HEK293 (cell line): ENCODE measurements at regions of chr22 and their contacts with region 1.

Region 1: GRCh38 chr22:37843741-37843990 is 468 bp downstream of the ANKRD54 start:
- H3K4me3 ChIP-seq: peak overlapping the region; percentile 74
- H3K27ac ChIP-seq: peak overlapping the region; percentile 95
- H3K4me1 ChIP-seq: no peaks in the 10 kb centered on the region
- CTCF ChIP-seq: no peak

Region 2: GRCh38 chr22:37581504-37581903 is 262.2 kb before region 1 on chr22:
- CTCF ChIA-PET with region 1: no interaction called
- POLR2A ChIA-PET with region 1: no interaction called
- H3K4me3 ChIP-seq: no peak overlapping the region
- H3K27ac ChIP-seq: no peak overlapping the region
- H3K4me1 ChIP-seq: 0 out of 2 replicates have a peak, but pooled peaks cover 3% of the 10 kb centered on the region
- CTCF ChIP-seq: no peak

Region 3: GRCh38 chr22:37807410-37808293 is 36.0 kb before region 1 on chr22 and contains the start of gene GCAT:
- CTCF ChIA-PET with region 1: interaction called, 5 read pairs
- POLR2A ChIA-PET with region 1: interaction called, 16 read pairs
- H3K4me3 ChIP-seq: peak within 1 kb of the TSS; percentile 68
- H3K27ac ChIP-seq: peak within 1 kb of the TSS; percentile 45; the same call in 1 of the 2 replicates
- H3K4me1 ChIP-seq: peaks cover 6% of the 10 kb centered on the region; the same call in 1 of the 2 replicates
- CTCF ChIP-seq: no peak

Region 4: GRCh38 chr22:37855462-37855861 is 11.8 kb after region 1 on chr22:
- CTCF ChIA-PET with region 1: interaction called, 4 read pairs
- POLR2A ChIA-PET with region 1: interaction called, 11 read pairs
- H3K4me3 ChIP-seq: no peak overlapping the region
- H3K27ac ChIP-seq: no peak overlapping the region; the same call in 1 of the 2 replicates
- H3K4me1 ChIP-seq: no peaks in the 10 kb centered on the region
- CTCF ChIP-seq: no peak

Region 5: GRCh38 chr22:37905534-37906363 is 62.1 kb after region 1 on chr22 and contains the start of gene MICALL1:
- CTCF ChIA-PET with region 1: no interaction called
- POLR2A ChIA-PET with region 1: interaction called, 24 read pairs
- H3K4me3 ChIP-seq: peak within 1 kb of the TSS; percentile 72
- H3K27ac ChIP-seq: peak within 1 kb of the TSS; percentile 98
- H3K4me1 ChIP-seq: peaks cover 10% of the 10 kb centered on the region; the same call in 1 of the 2 replicates
- CTCF ChIP-seq: peak; percentile 28; the same call in 1 of the 2 replicates

Region 6: DNA sequence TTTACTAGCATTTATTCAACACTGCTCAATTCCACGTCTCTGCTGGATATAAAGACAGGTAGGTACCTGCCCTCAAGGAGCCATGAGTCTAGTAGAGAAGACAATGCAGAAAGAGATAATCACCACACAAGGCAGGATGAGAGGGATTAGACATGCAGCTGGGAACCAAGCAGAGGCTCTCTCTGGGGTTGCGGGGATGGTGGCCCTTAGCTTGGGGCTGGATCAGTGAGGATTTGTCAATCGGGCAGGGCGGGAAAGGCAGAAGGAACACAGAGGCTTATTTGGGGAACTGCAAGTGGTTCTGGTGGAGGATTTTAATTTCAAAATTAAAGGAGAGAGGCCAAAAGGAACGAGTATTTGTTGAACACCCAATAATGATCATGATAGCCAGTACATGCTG is 734.8 kb after region 1 on chr22:
- CTCF ChIA-PET with region 1: no interaction called
- POLR2A ChIA-PET with region 1: no interaction called
- H3K4me3 ChIP-seq: no peak overlapping the region
- H3K27ac ChIP-seq: no peak overlapping the region
- H3K4me1 ChIP-seq: no peaks in the 10 kb centered on the region
- CTCF ChIP-seq: no peak